RWPE1 (cell line): ENCODE measurements at regions of chr9 and their contacts with region 1.

Region 1: DNA sequence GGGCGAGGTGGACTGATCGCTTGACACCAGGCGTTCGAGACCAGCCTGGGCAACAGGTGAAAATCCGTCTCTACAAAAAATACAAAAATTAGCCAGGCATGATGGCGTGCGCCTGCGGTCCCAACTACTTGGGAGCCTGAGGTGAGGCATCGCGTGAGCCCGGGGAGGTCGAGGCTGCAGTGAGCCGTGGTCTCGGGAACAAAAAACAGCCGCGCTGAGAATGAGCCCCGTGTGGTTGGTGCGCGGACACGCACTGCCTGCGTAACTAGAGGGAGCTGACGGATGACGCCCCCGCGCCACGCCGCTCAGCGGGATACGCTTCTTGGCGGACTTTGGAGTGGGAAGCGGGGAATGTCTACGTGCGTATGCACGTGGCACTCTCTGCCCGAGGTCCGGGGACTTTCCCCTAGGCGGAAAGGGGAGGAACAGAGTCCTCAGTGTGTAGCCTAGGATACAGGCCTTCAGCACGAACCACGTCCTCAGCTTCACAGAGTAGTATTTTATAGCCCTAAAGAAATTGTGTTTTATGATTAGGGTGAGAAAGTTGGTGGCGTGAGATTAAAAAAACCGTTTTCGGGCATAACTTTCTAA is at the start of gene RMRP:
- DNase-seq: peak; percentile 98
- H3K27ac ChIP-seq: peak within 1 kb of the TSS; percentile 92
- CTCF ChIP-seq: no peak

Region 2: GRCh38 chr9:35646533-35647265 is 10.9 kb before region 1 on chr9:
- CTCF ChIA-PET with region 1: interaction called, 21 read pairs
- POLR2A ChIA-PET with region 1: no interaction called
- DNase-seq: peak; percentile 96
- H3K27ac ChIP-seq: peak overlapping the region; percentile 85
- CTCF ChIP-seq: peak; percentile 100

Region 3: DNA sequence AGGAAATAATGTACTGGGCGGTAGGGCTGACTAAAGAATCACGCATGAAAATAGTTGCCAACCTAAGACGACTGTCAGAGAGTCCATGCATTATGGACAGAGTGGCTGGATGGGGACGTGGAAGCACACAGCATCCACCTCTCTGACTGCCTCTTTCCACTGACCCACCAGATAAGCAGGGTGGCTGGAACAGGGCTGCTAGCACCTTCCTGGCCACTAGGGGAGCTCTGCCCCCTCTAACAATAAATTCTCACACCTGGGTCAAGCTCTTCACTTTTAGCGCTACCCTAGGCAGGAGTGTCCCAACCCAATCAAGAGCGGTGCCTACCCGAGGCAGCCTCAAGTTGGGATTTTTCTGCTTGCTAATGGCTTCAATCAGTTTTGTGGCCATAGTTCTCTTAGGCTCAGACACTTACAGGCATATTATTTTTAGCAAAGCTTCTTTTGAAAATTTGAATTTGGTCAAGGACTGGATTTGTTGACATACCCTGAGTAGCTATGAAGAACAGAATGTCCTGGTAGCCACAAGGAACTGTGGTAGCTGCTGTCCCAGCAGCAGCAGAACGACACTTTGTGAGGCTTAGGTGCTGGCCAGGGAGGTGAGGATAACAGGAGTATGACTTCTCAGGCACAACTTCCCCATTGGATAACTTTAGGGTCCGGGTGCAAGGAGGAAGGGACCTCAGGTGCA is 39.0 kb after region 1 on chr9:
- CTCF ChIA-PET with region 1: interaction called, 10 read pairs
- POLR2A ChIA-PET with region 1: no interaction called
- DNase-seq: peak; percentile 77
- H3K27ac ChIP-seq: peak overlapping the region; percentile 45
- CTCF ChIP-seq: peak; percentile 100

Region 4: DNA sequence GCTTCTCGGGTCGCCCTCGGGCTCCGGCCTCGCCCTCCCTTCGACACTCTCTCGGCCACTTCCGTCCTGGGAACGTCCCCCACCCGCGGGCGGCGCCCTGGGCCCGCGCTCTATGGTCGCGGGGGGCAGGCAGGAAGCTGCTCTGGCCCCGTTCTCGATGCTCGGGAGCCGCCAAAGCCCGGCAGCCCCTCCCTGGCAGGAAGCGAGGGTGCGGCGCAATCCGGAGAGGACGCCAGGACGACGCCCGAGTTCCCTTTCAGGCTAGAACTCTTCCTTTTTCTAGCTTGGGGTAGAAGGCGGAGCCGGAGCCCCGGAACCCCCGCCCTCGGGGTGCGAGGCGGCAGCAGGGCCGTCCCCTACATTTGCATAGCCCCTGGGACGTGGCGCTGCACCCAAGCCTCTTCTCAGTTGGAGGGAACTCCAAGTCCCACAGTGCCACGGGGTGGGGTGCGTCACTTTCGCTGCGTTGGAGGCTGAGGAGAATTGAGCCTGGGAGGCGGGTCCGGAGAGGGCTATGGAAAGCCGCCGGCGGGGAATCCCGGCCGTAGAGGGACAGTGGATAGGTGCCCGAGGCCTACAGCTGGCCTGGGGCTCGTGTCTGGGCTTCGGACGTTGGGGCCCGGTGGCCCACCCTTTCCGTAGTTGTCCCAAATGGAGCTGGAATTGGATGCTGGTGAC is 74.6 kb after region 1 on chr9 and contains the starts of genes CREB3 and TLN1:
- CTCF ChIA-PET with region 1: interaction called, 10 read pairs
- POLR2A ChIA-PET with region 1: interaction called, 3 read pairs
- DNase-seq: peak; percentile 100
- H3K27ac ChIP-seq: peak within 1 kb of the TSS; percentile 95
- CTCF ChIP-seq: peak; percentile 70